ENCODE measurements at regions of chr10 and their contacts with region 1.

Region 1: DNA sequence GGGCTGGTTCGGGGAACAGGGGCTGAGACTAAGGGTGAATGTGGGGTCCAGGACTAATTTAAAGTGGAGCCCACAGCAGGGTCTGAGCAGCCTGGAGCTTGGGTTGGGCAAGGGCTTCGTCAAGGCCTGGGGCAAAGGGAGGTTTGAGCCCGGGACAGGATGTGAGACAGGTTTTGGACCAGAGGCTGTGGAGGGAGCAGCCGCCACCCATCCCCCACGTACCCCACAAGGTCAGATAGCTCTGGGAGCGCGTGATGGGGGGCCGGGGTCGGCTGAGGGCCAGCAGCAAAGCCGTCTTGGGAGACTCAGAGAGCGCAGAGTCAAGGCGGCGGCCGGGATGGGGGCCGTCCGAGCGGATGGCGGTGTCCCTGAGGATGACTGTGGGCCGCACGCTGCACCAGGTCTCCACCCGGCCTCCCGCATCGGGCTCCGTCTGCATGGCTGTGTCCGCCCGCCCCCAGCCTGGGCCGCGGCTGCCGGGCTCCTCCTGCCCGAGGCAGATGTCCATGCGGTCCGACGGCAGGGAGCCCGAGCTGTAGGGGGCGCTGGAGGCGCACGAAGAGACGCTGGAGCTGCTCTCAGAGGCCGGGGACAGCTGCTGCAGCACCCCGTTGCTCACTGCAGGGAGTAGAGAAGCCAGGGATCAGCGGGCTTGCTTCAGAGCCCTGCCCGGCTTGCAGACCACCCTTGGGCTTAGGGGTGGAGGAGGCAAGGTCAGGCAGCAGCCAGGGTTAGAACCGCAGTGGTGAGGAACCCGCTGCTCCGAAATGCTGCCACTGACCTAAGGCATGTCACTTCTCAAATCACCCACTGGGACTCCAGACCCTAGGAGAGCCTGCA is 12.1 kb downstream of the PDZD7 start:
- DNase-seq: peak; percentile 76
- H3K4me3 Mint-ChIP-seq: no peak overlapping the region
- H3K27ac Mint-ChIP-seq: no peak overlapping the region
- H3K4me1 Mint-ChIP-seq: peaks cover 11% of the 10 kb centered on the region
- H3K27me3 Mint-ChIP-seq: peaks cover 38% of the 10 kb centered on the region

Region 2: GRCh38 chr10:100986952-100987750 is 31.7 kb before region 1 on chr10 and contains the starts of genes MRPL43 and TWNK:
- CTCF ChIA-PET with region 1: interaction called, 10 read pairs
- POLR2A ChIA-PET with region 1: no interaction called
- DNase-seq: peak; percentile 90
- H3K4me3 Mint-ChIP-seq: peak within 1 kb of the TSS; percentile 89
- H3K27ac Mint-ChIP-seq: peak within 1 kb of the TSS; percentile 83
- H3K4me1 Mint-ChIP-seq: peaks cover 42% of the 10 kb centered on the region
- H3K27me3 Mint-ChIP-seq: no peaks in the 10 kb centered on the region
- total RNA-seq, gene MRPL43: 55.9 to 57.0 TPM
- total RNA-seq, gene TWNK: 9.9 to 11.6 TPM